Endothelial cell of umbilical vein (primary cell): ENCODE measurements at regions of chr1 and their contacts with region 1.

Region 1: DNA sequence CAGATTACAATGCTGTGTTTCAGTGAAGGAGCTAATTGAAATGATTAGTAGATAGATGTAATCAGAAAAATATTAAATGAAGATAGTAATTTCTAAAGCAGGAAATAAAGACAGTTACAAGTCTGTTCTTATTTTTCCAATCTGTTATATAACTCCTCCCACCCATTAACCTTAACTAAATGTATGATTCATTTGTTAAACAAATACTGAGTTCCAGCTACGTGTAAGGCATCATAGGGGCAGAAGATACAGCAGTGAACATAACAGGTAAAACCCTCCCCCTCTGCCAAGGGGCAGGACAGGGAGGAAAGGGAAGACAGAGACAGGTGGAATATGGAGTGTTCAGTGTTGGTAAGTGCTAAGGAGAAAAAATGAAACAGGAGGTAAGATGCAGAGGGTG is at the start of gene FAM177B:
- DNase-seq: no peak
- H3K4me3 ChIP-seq: no peak within 1 kb of the TSS
- H3K27ac ChIP-seq: no peak within 1 kb of the TSS
- H3K4me1 ChIP-seq: no peaks in the 10 kb centered on the region
- H3K27me3 ChIP-seq: no peaks in the 10 kb centered on the region
- CTCF ChIP-seq: no peak
- POLR2A ChIP-seq: no peak
- total RNA-seq, gene FAM177B: not detected in 2 replicates

Region 2: GRCh38 chr1:223001653-223002634 is 265.0 kb after region 1 on chr1:
- CTCF ChIA-PET with region 1: interaction called, 6 read pairs
- POLR2A ChIA-PET with region 1: no interaction called
- dilution Hi-C with region 1: no loop called
- intact Hi-C with region 1: loop called (anchors 1 kb)
- DNase-seq: no peak
- H3K4me3 ChIP-seq: no peak overlapping the region
- H3K27ac ChIP-seq: no peak overlapping the region
- H3K4me1 ChIP-seq: no peaks in the 10 kb centered on the region
- H3K27me3 ChIP-seq: no peaks in the 10 kb centered on the region
- CTCF ChIP-seq: peak; percentile 19 to 22
- POLR2A ChIP-seq: no peak

Region 3: DNA sequence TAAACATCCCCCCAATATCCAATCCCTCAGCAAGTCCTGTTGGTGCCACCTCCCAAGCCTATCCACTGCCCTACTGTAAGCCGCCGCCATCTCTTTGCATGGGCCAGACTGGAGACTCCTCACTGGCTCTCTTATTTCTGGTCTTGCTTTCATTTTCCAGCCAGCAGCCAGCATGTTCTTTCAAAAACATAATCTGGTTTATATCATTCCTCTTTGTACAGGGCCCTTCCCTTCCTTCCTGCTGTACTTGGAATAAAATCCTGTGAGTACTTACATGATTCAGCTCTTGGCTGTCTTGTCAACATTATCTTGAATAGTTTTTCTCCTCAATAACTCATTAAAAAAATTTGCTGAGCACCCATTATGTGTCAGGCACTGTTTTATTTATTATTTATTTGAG is 377.9 kb after region 1 on chr1:
- CTCF ChIA-PET with region 1: no interaction called
- POLR2A ChIA-PET with region 1: no interaction called
- dilution Hi-C with region 1: no loop called
- intact Hi-C with region 1: no loop called
- DNase-seq: peak; percentile 81
- H3K4me3 ChIP-seq: no peak overlapping the region
- H3K27ac ChIP-seq: peak overlapping the region; percentile 32
- H3K4me1 ChIP-seq: peaks cover 14% of the 10 kb centered on the region
- H3K27me3 ChIP-seq: no peaks in the 10 kb centered on the region
- CTCF ChIP-seq: no peak
- POLR2A ChIP-seq: peak; percentile 30

Region 4: GRCh38 chr1:223683586-223684487 is 946.9 kb after region 1 on chr1:
- CTCF ChIA-PET with region 1: no interaction called
- POLR2A ChIA-PET with region 1: no interaction called
- dilution Hi-C with region 1: no loop called
- intact Hi-C with region 1: loop called (anchors 1 kb)
- DNase-seq: peak; percentile 55
- H3K4me3 ChIP-seq: no peak overlapping the region
- H3K27ac ChIP-seq: no peak overlapping the region
- H3K4me1 ChIP-seq: no peaks in the 10 kb centered on the region
- H3K27me3 ChIP-seq: peaks cover 9 to 24% of the 10 kb centered on the region in 2 experiments
- CTCF ChIP-seq: peak; percentile 54 to 68
- POLR2A ChIP-seq: no peak